Activated CD4-positive, alpha-beta memory T cell treated with anti-CD3 and anti-CD28 coated beads, Interleukin-2, amount 10 ng/mL, durations not matched to agents 7 days and 5 days (primary cell): ENCODE measurements at regions of chr6 and their contacts with region 1.

Region 1: DNA sequence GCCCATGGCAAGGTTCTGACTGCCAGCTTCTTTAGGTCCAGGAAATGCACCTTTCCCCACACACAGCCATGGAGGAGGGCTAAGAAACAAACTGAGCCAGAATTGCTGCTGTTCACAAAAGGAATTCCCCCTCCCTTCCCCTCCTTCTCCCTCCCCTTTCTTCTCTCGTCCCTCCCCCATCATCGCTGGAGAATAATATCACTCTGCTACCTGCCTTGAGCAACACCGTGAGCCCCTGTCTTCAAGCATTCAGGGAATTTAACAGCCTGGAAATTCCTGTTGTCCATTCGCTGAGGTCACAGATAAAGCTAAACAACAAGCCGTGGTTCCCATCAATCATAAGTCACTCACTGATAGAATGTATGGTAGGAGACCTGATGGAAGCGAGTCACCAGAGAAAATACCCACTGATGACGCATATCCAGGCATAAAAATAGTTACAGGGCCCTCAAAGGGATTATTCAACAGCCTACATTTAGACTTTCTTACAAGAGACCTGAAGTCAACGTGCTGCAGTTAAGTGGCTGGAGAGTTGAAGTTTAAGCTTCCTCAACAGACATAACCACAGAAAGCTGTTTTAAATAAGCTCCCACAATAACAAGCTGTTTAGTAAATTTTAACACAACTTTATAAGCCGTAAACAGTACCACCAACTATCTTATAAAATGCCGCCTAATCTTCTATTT is 59.7 kb downstream of the HIVEP2 start:
- DNase-seq: peak; percentile 35
- H3K4me3 Mint-ChIP-seq: peak overlapping the region; percentile 84
- H3K27ac Mint-ChIP-seq: peak overlapping the region; percentile 93
- H3K4me1 Mint-ChIP-seq: peaks cover 71% of the 10 kb centered on the region
- H3K27me3 Mint-ChIP-seq: no peaks in the 10 kb centered on the region

Region 2: GRCh38 chr6:142819603-142820337 is 65.6 kb before region 1 on chr6:
- CTCF ChIA-PET with region 1: interaction called, 4 read pairs
- POLR2A ChIA-PET with region 1: interaction called, 17 read pairs
- DNase-seq: peak; percentile 52
- H3K4me3 Mint-ChIP-seq: peak overlapping the region; percentile 79
- H3K27ac Mint-ChIP-seq: peak overlapping the region; percentile 92
- H3K4me1 Mint-ChIP-seq: peaks cover 64% of the 10 kb centered on the region
- H3K27me3 Mint-ChIP-seq: no peaks in the 10 kb centered on the region

Region 3: GRCh38 chr6:142857233-142857761 is 28.0 kb before region 1 on chr6:
- CTCF ChIA-PET with region 1: interaction called, 7 read pairs
- POLR2A ChIA-PET with region 1: interaction called, 64 read pairs
- DNase-seq: no peak
- H3K4me3 Mint-ChIP-seq: peak overlapping the region; percentile 69
- H3K27ac Mint-ChIP-seq: peak overlapping the region; percentile 98
- H3K4me1 Mint-ChIP-seq: peaks cover 82% of the 10 kb centered on the region
- H3K27me3 Mint-ChIP-seq: no peaks in the 10 kb centered on the region

Region 4: GRCh38 chr6:142902636-142903053 is 17.3 kb after region 1 on chr6:
- CTCF ChIA-PET with region 1: interaction called, 6 read pairs
- POLR2A ChIA-PET with region 1: interaction called, 69 read pairs
- DNase-seq: peak; percentile 80
- H3K4me3 Mint-ChIP-seq: peak overlapping the region; percentile 58
- H3K27ac Mint-ChIP-seq: peak overlapping the region; percentile 93
- H3K4me1 Mint-ChIP-seq: peaks cover 51% of the 10 kb centered on the region
- H3K27me3 Mint-ChIP-seq: no peaks in the 10 kb centered on the region

Region 5: DNA sequence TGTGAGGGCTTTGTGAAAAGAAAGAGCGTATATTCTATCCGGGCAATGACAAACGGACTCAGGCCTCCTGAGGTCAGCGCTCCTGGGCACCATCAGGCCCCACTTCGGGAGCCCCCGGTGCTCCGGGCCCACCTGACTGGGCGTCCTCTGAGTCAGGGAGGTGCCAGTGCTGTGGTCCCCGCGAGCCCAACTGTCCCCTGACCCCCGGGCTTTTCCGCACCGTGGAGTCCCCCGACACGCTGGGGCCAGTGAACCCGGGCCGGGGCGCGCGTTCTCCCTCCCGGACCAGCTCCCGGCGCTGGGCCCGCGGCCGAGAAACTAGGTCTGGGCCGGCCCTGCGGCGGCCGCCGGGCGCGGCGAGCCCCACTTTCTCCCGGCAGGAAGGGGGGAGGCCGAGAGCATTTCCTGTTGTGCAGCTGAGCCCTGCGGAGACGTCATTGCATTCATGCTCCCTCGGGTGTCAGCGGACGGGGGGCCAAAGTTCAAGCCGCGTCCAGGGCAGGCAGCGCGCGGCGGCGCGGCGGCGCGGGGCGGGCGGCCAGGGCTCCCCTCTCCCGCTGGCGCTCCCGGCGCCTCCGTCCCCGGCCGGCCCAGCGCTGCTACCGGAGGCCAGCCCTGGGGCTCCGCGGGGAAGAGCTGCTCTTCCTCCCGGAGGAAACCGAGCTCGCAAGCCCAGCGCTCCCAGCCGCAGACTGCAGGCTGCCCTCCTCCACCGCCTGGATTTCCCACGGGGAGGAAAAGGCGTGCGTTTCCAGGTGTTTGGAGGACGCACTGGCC is 41.4 kb after region 1 on chr6:
- CTCF ChIA-PET with region 1: interaction called, 7 read pairs
- POLR2A ChIA-PET with region 1: interaction called, 18 read pairs
- DNase-seq: peak; percentile 82
- H3K4me3 Mint-ChIP-seq: peak overlapping the region; percentile 84
- H3K27ac Mint-ChIP-seq: peak overlapping the region; percentile 87
- H3K4me1 Mint-ChIP-seq: peaks cover 42% of the 10 kb centered on the region
- H3K27me3 Mint-ChIP-seq: no peaks in the 10 kb centered on the region